Panc1 (cell line): ENCODE measurements at regions of chr1 and their contacts with region 1.

Region 1: DNA sequence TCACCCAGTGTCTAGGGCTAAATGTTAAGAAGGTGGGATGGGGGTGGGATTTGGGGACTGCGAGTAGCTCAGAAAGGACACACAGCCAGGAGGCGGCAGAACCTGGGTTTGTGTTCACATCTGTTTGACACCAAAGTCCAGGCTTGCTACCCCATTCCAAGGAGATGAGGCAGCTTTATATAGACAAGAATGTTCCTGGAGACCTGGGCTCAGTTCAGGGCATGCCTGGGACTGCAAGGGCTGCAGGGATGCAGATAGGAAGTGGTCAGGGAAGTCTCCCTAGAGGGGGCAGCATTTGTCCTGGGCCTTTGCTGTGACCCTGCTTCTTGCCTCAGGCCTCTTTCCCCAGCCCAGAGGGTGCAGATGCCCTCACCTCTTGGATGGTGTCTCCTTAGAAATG is 16.3 kb downstream of the PADI3 start:
- DNase-seq: no peak
- ATAC-seq: peak; percentile 68
- H3K4me3 ChIP-seq: no peak overlapping the region
- H3K27ac ChIP-seq: no peak overlapping the region
- H3K4me1 ChIP-seq: no peaks in the 10 kb centered on the region
- H3K27me3 ChIP-seq: no peaks in the 10 kb centered on the region
- CTCF ChIP-seq: no peak

Region 2: DNA sequence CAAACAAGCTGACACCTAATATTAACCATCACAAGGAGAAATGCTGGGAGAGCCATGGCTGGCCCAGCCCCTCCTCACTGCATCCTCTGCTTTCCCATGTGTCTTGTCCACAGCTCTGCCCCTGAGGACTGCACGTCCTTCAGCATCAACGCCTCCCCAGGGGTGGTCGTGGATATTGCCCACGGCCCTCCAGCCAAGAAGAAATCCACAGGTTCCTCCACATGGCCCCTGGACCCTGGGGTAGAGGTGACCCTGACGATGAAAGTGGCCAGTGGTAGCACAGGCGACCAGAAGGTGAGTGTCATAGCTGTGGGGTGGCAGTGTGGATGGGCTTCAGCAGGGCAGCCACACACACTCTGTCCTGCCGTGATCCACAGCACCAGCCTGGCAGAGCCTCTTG is 65.7 kb after region 1 on chr1:
- CTCF ChIA-PET with region 1: no interaction called
- POLR2A ChIA-PET with region 1: interaction called, 11 read pairs
- in situ Hi-C with region 1: no loop called
- intact Hi-C with region 1: no loop called
- DNase-seq: no peak
- ATAC-seq: no peak
- H3K4me3 ChIP-seq: no peak overlapping the region
- H3K27ac ChIP-seq: no peak overlapping the region
- H3K4me1 ChIP-seq: 0 out of 2 replicates have a peak, but pooled peaks cover 4% of the 10 kb centered on the region
- H3K27me3 ChIP-seq: no peaks in the 10 kb centered on the region
- CTCF ChIP-seq: no peak

Region 3: DNA sequence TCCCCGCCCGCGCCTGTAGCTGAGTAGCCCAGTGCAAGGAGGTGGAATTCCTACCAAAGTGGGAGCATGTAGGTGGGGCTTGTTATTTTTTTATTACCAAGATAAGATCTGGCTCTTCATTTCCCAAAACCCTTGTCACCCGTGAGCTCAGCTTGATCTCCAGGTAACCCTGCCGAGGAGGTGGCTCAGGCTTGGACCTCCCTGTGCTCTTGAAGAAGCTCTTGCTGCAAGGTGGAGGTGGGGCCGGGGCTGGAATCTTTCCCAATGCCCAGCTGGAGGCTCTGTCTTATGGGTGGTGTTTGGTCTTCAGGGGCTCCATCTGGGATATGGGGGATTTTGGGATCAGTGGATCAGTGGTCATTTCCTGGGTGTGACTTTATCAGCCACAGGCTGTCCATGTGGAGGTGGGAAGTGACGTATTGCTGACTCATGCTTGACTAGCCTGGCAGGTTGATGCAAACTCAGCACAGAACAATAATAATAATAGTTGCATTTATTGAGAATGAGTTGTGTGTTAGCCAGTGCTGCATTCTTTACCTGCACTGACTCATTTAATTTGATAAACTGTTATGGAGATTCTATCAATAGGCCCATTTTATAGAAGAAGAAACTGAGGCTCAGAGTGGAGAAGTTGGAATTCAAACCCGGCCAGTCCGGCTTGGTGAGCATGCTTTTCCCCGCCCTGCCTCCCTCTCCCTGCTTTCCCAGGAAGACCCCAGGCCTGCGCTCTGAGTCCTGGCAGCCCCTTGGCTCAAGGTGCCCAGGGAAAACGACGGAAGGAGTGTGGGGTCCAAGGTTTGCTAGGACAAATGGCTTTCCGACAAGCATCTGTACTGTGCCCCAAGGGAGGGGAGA is 83.2 kb after region 1 on chr1:
- CTCF ChIA-PET with region 1: no interaction called
- POLR2A ChIA-PET with region 1: no interaction called
- in situ Hi-C with region 1: no loop called
- intact Hi-C with region 1: no loop called
- DNase-seq: peak; percentile 10
- ATAC-seq: peak; percentile 70; the same call in 1 of the 2 replicates
- H3K4me3 ChIP-seq: no peak overlapping the region
- H3K27ac ChIP-seq: peak overlapping the region; percentile 19; the same call in 1 of the 2 replicates
- H3K4me1 ChIP-seq: peaks cover 8% of the 10 kb centered on the region
- H3K27me3 ChIP-seq: no peaks in the 10 kb centered on the region
- CTCF ChIP-seq: no peak